A549 (cell line): ENCODE measurements at regions of chr7 and their contacts with region 1.

Region 1: GRCh38 chr7:151110941-151111645 is 24.8 kb downstream of the AGAP3 start:
- DNase-seq: peak; percentile 70 to 92
- ATAC-seq: peak; percentile 81 to 89
- H3K4me3 ChIP-seq: no peak overlapping the region
- H3K27ac ChIP-seq: peak overlapping the region in 1 of 2 experiments; percentile 61; a peak in 2 of 6 replicates
- H3K4me1 ChIP-seq: peaks cover 38% of the 10 kb centered on the region
- CTCF ChIP-seq: peak; percentile 82
- EP300 ChIP-seq: no peak
- POLR2A ChIP-seq: no peak
- RAD21 ChIP-seq: peak; percentile 91

Region 2: GRCh38 chr7:150968734-150969372 is 142.2 kb before region 1 on chr7:
- CTCF ChIA-PET with region 1: interaction called, 50 read pairs
- POLR2A ChIA-PET with region 1: no interaction called
- DNase-seq: no peak
- ATAC-seq: no peak
- H3K4me3 ChIP-seq: no peak overlapping the region
- H3K27ac ChIP-seq: no peak overlapping the region
- H3K4me1 ChIP-seq: no peaks in the 10 kb centered on the region
- CTCF ChIP-seq: no peak
- EP300 ChIP-seq: no peak
- POLR2A ChIP-seq: no peak
- RAD21 ChIP-seq: no peak

Region 3: GRCh38 chr7:151008511-151009323 is 102.4 kb before region 1 on chr7:
- CTCF ChIA-PET with region 1: interaction called, 24 read pairs
- POLR2A ChIA-PET with region 1: no interaction called
- DNase-seq: peak; percentile 41 to 50
- ATAC-seq: peak in 1 of 2 experiments; percentile 74; a peak in 3 of 6 replicates
- H3K4me3 ChIP-seq: no peak overlapping the region
- H3K27ac ChIP-seq: no peak overlapping the region
- H3K4me1 ChIP-seq: peaks cover 23% of the 10 kb centered on the region; the same call in 1 of the 3 replicates
- CTCF ChIP-seq: peak; percentile 41; the same call in 2 of the 3 replicates
- EP300 ChIP-seq: no peak
- POLR2A ChIP-seq: no peak
- RAD21 ChIP-seq: no peak

Region 4: GRCh38 chr7:151038951-151039849 is 71.9 kb before region 1 on chr7:
- CTCF ChIA-PET with region 1: interaction called, 25 read pairs
- POLR2A ChIA-PET with region 1: no interaction called
- DNase-seq: peak; percentile 79 to 93
- ATAC-seq: peak; percentile 81 to 88
- H3K4me3 ChIP-seq: no peak overlapping the region
- H3K27ac ChIP-seq: peak overlapping the region; percentile 79 to 88
- H3K4me1 ChIP-seq: peaks cover 33% of the 10 kb centered on the region
- CTCF ChIP-seq: no peak
- EP300 ChIP-seq: no peak
- POLR2A ChIP-seq: peak; percentile 48
- RAD21 ChIP-seq: peak in 1 of 2 experiments; percentile 5; a peak in 2 of 5 replicates

Region 5: DNA sequence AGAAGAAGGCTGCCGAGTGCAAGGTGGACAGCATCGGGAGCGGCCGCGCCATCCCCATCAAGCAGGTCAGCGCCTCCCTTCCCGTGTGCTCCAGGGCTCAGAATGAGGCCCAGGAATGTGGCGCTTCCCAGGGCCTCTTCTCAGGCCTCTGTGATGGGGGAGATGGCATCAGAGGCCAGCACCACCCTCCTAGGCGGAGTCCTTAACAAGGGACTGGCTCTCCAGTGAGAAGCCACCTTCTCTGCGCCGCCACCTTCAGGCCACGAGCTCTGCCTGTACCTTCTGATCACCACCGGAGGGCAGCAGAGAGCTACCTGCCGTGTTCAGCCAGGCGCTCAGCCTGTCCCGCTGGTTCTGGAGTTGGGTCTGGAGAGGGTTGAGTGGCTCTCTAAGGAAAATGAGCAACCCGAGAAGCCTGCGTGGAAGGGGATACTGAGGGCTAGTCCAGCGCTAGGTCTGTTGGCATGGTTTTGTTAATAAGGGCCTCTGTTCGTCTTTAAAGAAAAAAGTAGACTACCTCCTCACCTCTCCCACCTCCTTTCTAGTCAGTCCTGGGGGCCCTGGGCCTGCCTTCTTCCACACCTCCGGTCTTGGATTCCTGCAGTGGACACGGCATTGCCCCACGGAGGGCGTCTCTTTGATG is 12.8 kb after region 1 on chr7:
- CTCF ChIA-PET with region 1: interaction called, 50 read pairs
- POLR2A ChIA-PET with region 1: no interaction called
- DNase-seq: peak; percentile 85 to 94
- ATAC-seq: peak; percentile 90 to 96
- H3K4me3 ChIP-seq: no peak overlapping the region
- H3K27ac ChIP-seq: no peak overlapping the region
- H3K4me1 ChIP-seq: no peaks in the 10 kb centered on the region
- CTCF ChIP-seq: peak; percentile 97
- EP300 ChIP-seq: no peak
- POLR2A ChIP-seq: no peak
- RAD21 ChIP-seq: peak; percentile 85 to 87